ENCODE measurements at regions of chr1 and their contacts with region 1.

Region 1: GRCh38 chr1:224457782-224458144 is 23.2 kb upstream of the WDR26 start:
- DNase-seq: no peak
- ATAC-seq: no peak
- H3K4me3 Mint-ChIP-seq: peak overlapping the region in 1 of 10 donors; percentile 45
- H3K27ac Mint-ChIP-seq: peak overlapping the region in 2 of 10 donors; percentile 31 to 33
- H3K4me1 Mint-ChIP-seq: peaks cover 5 to 17% (median 11%) of the 10 kb centered on the region in 4 donors
- H3K27me3 Mint-ChIP-seq: no peaks in the 10 kb centered on the region

Region 2: DNA sequence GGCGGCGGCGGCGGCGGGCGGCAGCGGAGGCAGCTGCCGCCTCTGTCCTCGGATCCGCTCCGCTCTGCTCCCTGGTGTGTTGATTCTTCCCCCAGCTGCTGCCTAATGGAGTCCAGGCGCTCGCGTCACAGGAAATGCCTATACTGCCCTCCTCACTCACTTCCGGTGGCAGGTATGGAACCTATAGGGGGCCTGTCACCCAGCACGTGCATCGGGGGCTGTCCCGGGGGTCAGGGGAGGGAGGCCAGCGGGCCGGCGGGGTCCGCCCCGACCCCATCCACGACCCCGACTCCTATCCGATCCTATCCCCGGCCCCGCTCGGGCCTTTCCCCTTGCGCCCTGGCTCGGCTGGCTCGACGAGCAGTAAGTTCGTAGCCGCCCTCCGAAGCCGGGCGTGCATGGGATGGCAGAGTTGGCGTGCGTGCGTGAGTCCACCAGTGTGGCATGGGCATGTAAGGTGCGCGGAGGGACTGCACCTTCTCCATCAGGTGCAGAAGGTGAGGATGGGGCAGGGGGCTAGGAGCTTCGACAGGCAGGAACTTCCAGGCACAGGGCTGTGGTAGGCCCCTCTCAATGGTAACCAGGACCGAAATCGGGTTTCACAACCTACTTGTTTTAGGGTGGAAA is 23.0 kb before region 1 on chr1 and contains the start of gene WDR26:
- POLR2A ChIA-PET with region 1: interaction called, 10 read pairs
- DNase-seq: peak; percentile 65 to 94 (median 85)
- ATAC-seq: peak; percentile 85 to 88
- H3K4me3 Mint-ChIP-seq: peak within 1 kb of the TSS; percentile 80 to 99 (median 96)
- H3K27ac Mint-ChIP-seq: peak within 1 kb of the TSS; percentile 80 to 99 (median 97)
- H3K4me1 Mint-ChIP-seq: peaks cover 18 to 56% (median 55%) of the 10 kb centered on the region in 4 donors
- H3K27me3 Mint-ChIP-seq: no peaks in the 10 kb centered on the region
- polyA plus RNA-seq, gene WDR26: 2.7 to 3.8 (median 2.8) TPM